H1 (cell line): ENCODE measurements at regions of chr19 and their contacts with region 1.

Region 1: GRCh38 chr19:18469069-18469846 is 31.3 kb upstream of the ISYNA1 start:
- DNase-seq: peak; percentile 53 to 95
- H3K4me3 ChIP-seq: no peak overlapping the region
- H3K27ac ChIP-seq: peak overlapping the region; percentile 27
- H3K4me1 ChIP-seq: peaks cover 0 to 1% (median 0%) of the 10 kb centered on the region in 4 experiments; a peak in 2 of 7 replicates
- H3K27me3 ChIP-seq: no peaks in the 10 kb centered on the region
- CTCF ChIP-seq: peak; percentile 92 to 96 (median 95)
- EP300 ChIP-seq: no peak
- POLR2A ChIP-seq: no peak
- RAD21 ChIP-seq: peak; percentile 49 to 60

Region 2: GRCh38 chr19:18304458-18305310 is 164.6 kb before region 1 on chr19:
- CTCF ChIA-PET with region 1: no interaction called
- POLR2A ChIA-PET with region 1: no interaction called
- DNase-seq: no peak
- H3K4me3 ChIP-seq: peak overlapping the region in 3 of 4 experiments; percentile 14 to 49 (median 34); a peak in 5 of 8 replicates
- H3K27ac ChIP-seq: peak overlapping the region; percentile 9; the same call in 1 of the 2 replicates
- H3K4me1 ChIP-seq: peaks cover 0 to 25% (median 10%) of the 10 kb centered on the region in 4 experiments; a peak in 6 of 7 replicates
- H3K27me3 ChIP-seq: no peaks in the 10 kb centered on the region
- CTCF ChIP-seq: no peak
- EP300 ChIP-seq: no peak
- POLR2A ChIP-seq: no peak
- RAD21 ChIP-seq: no peak

Region 3: GRCh38 chr19:18450931-18451845 is 18.1 kb before region 1 on chr19:
- CTCF ChIA-PET with region 1: interaction called, 143 read pairs
- POLR2A ChIA-PET with region 1: no interaction called
- DNase-seq: peak in 1 of 2 experiments; percentile 100
- H3K4me3 ChIP-seq: no peak overlapping the region
- H3K27ac ChIP-seq: no peak overlapping the region
- H3K4me1 ChIP-seq: no peaks in the 10 kb centered on the region; a peak in 3 of 7 replicates
- H3K27me3 ChIP-seq: no peaks in the 10 kb centered on the region
- CTCF ChIP-seq: peak; percentile 93 to 98 (median 95)
- EP300 ChIP-seq: no peak
- POLR2A ChIP-seq: no peak
- RAD21 ChIP-seq: peak; percentile 83 to 88

Region 4: DNA sequence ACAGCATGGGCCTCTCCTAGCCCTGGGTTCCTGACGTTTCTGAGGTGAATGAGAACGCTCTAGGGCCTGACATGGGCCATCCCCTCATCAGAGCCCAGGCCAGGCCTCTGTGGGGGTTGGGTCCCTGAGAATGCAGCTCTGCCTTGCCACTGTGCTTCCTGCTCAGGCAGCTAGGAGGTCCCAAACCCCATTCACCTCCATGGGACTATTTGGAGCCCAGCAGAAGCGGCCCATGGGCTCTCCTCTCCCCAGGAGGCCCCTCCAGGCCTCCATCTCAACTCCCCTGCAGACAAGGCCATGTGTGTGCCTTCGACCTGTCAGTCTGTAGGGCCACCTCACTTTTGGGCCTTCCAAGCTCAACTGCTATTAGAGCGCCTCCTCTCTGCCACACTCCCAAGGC is 15.7 kb after region 1 on chr19:
- CTCF ChIA-PET with region 1: interaction called, 213 read pairs
- POLR2A ChIA-PET with region 1: interaction called, 3 read pairs
- DNase-seq: no peak
- H3K4me3 ChIP-seq: no peak overlapping the region
- H3K27ac ChIP-seq: no peak overlapping the region
- H3K4me1 ChIP-seq: peaks cover 0 to 16% (median 8%) of the 10 kb centered on the region in 4 experiments; a peak in 5 of 7 replicates
- H3K27me3 ChIP-seq: no peaks in the 10 kb centered on the region
- CTCF ChIP-seq: peak; percentile 22 to 38 (median 23)
- EP300 ChIP-seq: no peak
- POLR2A ChIP-seq: no peak
- RAD21 ChIP-seq: peak in 1 of 2 experiments; percentile 18; a peak in 1 of 4 replicates

Region 5: GRCh38 chr19:18521885-18522624 is 52.8 kb after region 1 on chr19 and contains the start of gene ELL:
- CTCF ChIA-PET with region 1: interaction called, 33 read pairs
- POLR2A ChIA-PET with region 1: interaction called, 3 read pairs
- DNase-seq: peak; percentile 100
- H3K4me3 ChIP-seq: peak within 1 kb of the TSS; percentile 88 to 98 (median 89)
- H3K27ac ChIP-seq: peak within 1 kb of the TSS; percentile 76
- H3K4me1 ChIP-seq: peaks cover 0 to 3% (median under 1%) of the 10 kb centered on the region in 4 experiments; a peak in 4 of 7 replicates
- H3K27me3 ChIP-seq: no peaks in the 10 kb centered on the region; a peak in 1 of 7 replicates
- CTCF ChIP-seq: 0 out of 4 replicates have a peak, but pooled peaks of 1 of the 3 experiments have one; percentile 3
- EP300 ChIP-seq: no peak
- POLR2A ChIP-seq: peak in 1 of 2 experiments; percentile 87; a peak in 2 of 3 replicates
- RAD21 ChIP-seq: no peak
- total RNA-seq, gene ELL: 10.2 and 10.5 TPM in 2 replicates

Region 6: GRCh38 chr19:18588611-18589379 is 119.5 kb after region 1 on chr19 and contains the start of gene REX1BD:
- CTCF ChIA-PET with region 1: interaction called, 31 read pairs
- POLR2A ChIA-PET with region 1: no interaction called
- DNase-seq: peak in 1 of 2 experiments; percentile 93
- H3K4me3 ChIP-seq: peak within 1 kb of the TSS; percentile 78 to 91 (median 84)
- H3K27ac ChIP-seq: peak within 1 kb of the TSS; percentile 94
- H3K4me1 ChIP-seq: peaks cover 2 to 18% (median 12%) of the 10 kb centered on the region in 4 experiments
- H3K27me3 ChIP-seq: no peaks in the 10 kb centered on the region; a peak in 1 of 7 replicates
- CTCF ChIP-seq: peak; percentile 90 to 92 (median 91)
- EP300 ChIP-seq: peak in 1 of 2 experiments; percentile 66; a peak in 1 of 3 replicates
- POLR2A ChIP-seq: peak; percentile 75 to 87
- RAD21 ChIP-seq: peak; percentile 26 to 45
- total RNA-seq, gene REX1BD: 56.8 and 63.1 TPM in 2 replicates